Ovary (tissue), 10 donors: ENCODE measurements at regions of chr19 and their contacts with region 1.

Region 1: DNA sequence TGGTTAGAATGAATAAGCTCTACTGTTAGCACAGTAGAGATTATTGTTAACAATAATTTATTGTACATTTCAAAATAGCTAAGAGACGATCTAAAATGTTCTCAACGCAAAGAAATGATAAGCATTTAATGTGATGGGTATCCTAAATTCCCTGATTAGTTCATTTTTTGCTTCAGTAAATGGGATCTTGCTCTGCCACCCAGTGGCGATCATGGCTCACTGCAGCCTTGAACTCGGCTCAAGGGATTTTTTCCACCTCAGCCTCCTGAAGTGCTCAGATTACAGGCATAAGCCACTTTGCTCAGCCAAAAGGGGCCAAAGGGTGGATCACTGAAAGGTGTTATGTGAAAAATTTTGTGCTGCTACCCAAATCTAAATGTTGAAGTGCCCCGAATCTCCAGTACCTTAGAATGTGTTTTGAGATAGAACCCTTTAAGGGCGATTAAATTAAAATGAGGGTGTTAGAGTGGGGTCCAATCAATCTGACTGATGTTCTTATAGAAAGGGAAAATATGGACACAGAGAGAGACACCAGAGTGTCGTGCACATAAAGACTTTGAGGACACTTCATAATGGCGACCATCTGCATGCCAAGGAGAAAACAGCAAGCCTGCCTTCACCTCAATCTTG is 31.5 kb upstream of the ZNF766 start:
- DNase-seq: peak; percentile 42 to 70 (median 66)
- H3K4me3 ChIP-seq: no peak overlapping the region
- H3K27ac ChIP-seq: no peak overlapping the region
- H3K4me1 ChIP-seq: no peaks in the 10 kb centered on the region
- H3K27me3 ChIP-seq: no peaks in the 10 kb centered on the region
- CTCF ChIP-seq: peak; percentile 70 to 83 (median 72)
- EP300 ChIP-seq: no peak
- POLR2A ChIP-seq: no peak

Region 2: DNA sequence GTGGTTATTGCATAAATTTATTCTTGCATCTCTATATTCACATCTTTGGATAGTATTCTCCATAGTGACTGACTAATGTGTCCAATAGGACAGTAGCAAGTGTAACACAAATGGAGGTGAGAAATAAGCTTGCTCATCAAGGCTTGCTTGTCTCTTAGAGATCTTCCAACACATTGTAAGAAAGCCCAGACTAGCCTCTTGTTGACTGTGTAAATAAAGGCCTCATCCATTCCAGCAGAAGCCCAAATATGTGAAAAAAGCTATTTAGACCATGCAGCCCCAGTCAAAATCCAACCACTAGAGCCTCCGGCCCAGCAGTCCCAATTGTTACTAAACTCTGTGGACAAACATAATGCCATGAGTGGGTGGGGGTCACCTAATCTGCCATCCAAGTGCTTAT is 227.2 kb before region 1 on chr19:
- intact Hi-C with region 1: no loop called
- DNase-seq: no peak
- H3K4me3 ChIP-seq: no peak overlapping the region
- H3K27ac ChIP-seq: no peak overlapping the region
- H3K4me1 ChIP-seq: peaks cover 3% of the 10 kb centered on the region
- H3K27me3 ChIP-seq: no peaks in the 10 kb centered on the region
- CTCF ChIP-seq: no peak
- EP300 ChIP-seq: no peak
- POLR2A ChIP-seq: no peak

Region 3: DNA sequence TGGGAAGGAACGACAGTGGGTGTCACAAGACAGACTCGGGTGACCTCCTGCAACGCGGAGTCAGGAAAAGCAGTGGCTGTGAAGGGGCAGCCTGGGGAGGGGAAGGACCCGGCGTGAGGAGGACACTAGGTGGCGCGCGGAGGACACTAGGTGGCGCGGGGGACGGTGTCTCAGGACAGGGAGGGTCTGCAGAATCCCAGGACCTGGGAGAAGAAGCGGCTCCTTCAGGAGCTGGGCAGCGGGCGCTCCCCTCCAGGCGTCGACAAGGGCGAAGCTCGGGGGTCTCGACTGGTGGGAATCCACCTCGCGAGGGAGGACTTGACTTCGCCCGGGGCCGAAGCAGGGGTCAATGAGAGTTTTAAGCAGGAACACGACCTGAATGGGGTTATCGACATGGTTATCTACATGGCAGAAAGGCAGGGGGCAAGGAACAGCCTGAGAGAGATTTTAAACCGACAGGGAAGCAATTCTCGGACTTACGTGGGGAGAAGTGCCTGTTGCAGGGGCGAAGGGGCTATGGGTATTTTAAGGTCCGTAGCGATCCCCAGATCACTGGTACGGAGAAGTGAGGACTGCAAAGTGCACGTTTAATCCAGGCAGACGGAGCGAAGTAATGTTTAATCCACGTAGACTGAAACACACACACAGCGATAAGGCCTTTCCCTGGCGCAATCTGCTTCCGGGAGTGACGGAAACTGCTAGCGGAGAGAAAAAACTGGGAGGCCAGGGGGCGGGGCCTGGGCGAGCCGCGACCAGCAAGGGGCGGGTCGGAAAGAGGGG is 98.4 kb before region 1 on chr19 and contains the start of gene ZNF616:
- intact Hi-C with region 1: loop called in 3 of 4 experiments (anchors 2 to 10 kb)
- DNase-seq: peak; percentile 98 to 99 (median 98)
- H3K4me3 ChIP-seq: peak within 1 kb of the TSS; percentile 98
- H3K27ac ChIP-seq: peak within 1 kb of the TSS; percentile 58 to 85
- H3K4me1 ChIP-seq: no peaks in the 10 kb centered on the region
- H3K27me3 ChIP-seq: no peaks in the 10 kb centered on the region
- CTCF ChIP-seq: peak; percentile 65 to 77 (median 75)
- EP300 ChIP-seq: no peak
- POLR2A ChIP-seq: peak; percentile 76
- total RNA-seq, gene ZNF616: 4.5 to 22.3 (median 14.1) TPM

Region 4: DNA sequence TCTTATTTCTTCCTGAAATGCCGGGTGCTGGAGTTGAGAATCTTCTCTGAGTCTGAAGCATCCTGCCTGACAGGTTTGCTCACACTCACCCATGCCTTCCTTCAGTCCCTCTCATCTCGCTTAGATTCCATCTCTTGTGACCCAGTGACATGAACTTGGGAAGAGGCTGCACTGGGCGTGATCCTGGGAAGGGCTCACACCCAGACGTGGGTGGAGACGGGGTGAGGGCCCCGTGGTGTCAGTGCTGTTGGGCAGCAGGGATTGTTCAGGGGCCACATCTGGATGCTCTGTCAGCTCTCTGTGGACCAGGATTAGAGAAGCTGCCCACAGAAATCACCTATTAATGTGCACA is 39.7 kb after region 1 on chr19:
- intact Hi-C with region 1: no loop called
- DNase-seq: no peak
- H3K4me3 ChIP-seq: no peak overlapping the region
- H3K27ac ChIP-seq: no peak overlapping the region
- H3K4me1 ChIP-seq: peaks cover 7% of the 10 kb centered on the region
- H3K27me3 ChIP-seq: no peaks in the 10 kb centered on the region
- CTCF ChIP-seq: no peak
- EP300 ChIP-seq: no peak
- POLR2A ChIP-seq: no peak